K562 (cell line): ENCODE measurements at regions of chr2 and their contacts with region 1.

Region 1: GRCh38 chr2:46258937-46259776 is 38.0 kb upstream of the EPAS1 start:
- DNase-seq: peak; percentile 81 to 83 (median 82)
- ATAC-seq: peak; percentile 86
- H3K4me3 ChIP-seq: no peak overlapping the region
- H3K27ac ChIP-seq: peak overlapping the region; percentile 51; the same call in 2 of the 3 replicates
- H3K4me1 ChIP-seq: peaks cover 6 to 39% of the 10 kb centered on the region in 2 experiments; a peak in 4 of 5 replicates
- H3K27me3 ChIP-seq: no peaks in the 10 kb centered on the region
- CTCF ChIP-seq: no peak
- EP300 ChIP-seq: peak; percentile 94
- POLR2A ChIP-seq: no peak
- RAD21 ChIP-seq: 0 out of 4 replicates have a peak, but pooled peaks of 1 of the 2 experiments have one; percentile 13

Region 2: GRCh38 chr2:46306330-46306751 is 47.2 kb after region 1 on chr2:
- CTCF ChIA-PET with region 1: no interaction called
- POLR2A ChIA-PET with region 1: no interaction called
- in situ Hi-C with region 1: no loop called
- intact Hi-C with region 1: no loop called
- DNase-seq: no peak
- ATAC-seq: no peak
- H3K4me3 ChIP-seq: no peak overlapping the region
- H3K27ac ChIP-seq: no peak overlapping the region
- H3K4me1 ChIP-seq: peaks cover 7 to 10% of the 10 kb centered on the region in 2 experiments; a peak in 2 of 5 replicates
- H3K27me3 ChIP-seq: no peaks in the 10 kb centered on the region
- CTCF ChIP-seq: no peak
- EP300 ChIP-seq: no peak
- POLR2A ChIP-seq: no peak
- RAD21 ChIP-seq: no peak

Region 3: GRCh38 chr2:46339667-46340459 is 80.7 kb after region 1 on chr2:
- CTCF ChIA-PET with region 1: no interaction called
- POLR2A ChIA-PET with region 1: no interaction called
- in situ Hi-C with region 1: no loop called
- intact Hi-C with region 1: loop called (anchors 1 kb)
- DNase-seq: peak; percentile 93 to 96 (median 94)
- ATAC-seq: peak; percentile 98
- H3K4me3 ChIP-seq: no peak overlapping the region
- H3K27ac ChIP-seq: peak overlapping the region; percentile 67
- H3K4me1 ChIP-seq: peaks cover 24 to 52% of the 10 kb centered on the region in 2 experiments
- H3K27me3 ChIP-seq: no peaks in the 10 kb centered on the region
- CTCF ChIP-seq: peak; percentile 43 to 57 (median 49); a peak in 5 of 6 replicates
- EP300 ChIP-seq: peak; percentile 99
- POLR2A ChIP-seq: no peak
- RAD21 ChIP-seq: peak; percentile 60 to 61